ENCODE measurements at regions of chr3 and their contacts with region 1.

Region 1: GRCh38 chr3:195894780-195895607 is 13.4 kb downstream of the TNK2 start:
- DNase-seq: peak; percentile 72
- H3K4me3 Mint-ChIP-seq: peak overlapping the region; percentile 83
- H3K27ac Mint-ChIP-seq: peak overlapping the region; percentile 50
- H3K4me1 Mint-ChIP-seq: peaks cover 34% of the 10 kb centered on the region
- H3K27me3 Mint-ChIP-seq: no peaks in the 10 kb centered on the region
- CTCF ChIP-seq: peak; percentile 94

Region 2: GRCh38 chr3:194592798-194593752 is 1301.9 kb before region 1 on chr3:
- CTCF ChIA-PET with region 1: no interaction called
- intact Hi-C with region 1: no loop called
- DNase-seq: peak; percentile 78
- H3K4me3 Mint-ChIP-seq: no peak overlapping the region
- H3K27ac Mint-ChIP-seq: no peak overlapping the region
- H3K4me1 Mint-ChIP-seq: peaks cover 26% of the 10 kb centered on the region
- H3K27me3 Mint-ChIP-seq: no peaks in the 10 kb centered on the region
- CTCF ChIP-seq: no peak

Region 3: GRCh38 chr3:195154793-195155535 is 740.0 kb before region 1 on chr3:
- CTCF ChIA-PET with region 1: no interaction called
- intact Hi-C with region 1: no loop called
- DNase-seq: peak; percentile 90
- H3K4me3 Mint-ChIP-seq: no peak overlapping the region
- H3K27ac Mint-ChIP-seq: peak overlapping the region; percentile 57
- H3K4me1 Mint-ChIP-seq: peaks cover 68% of the 10 kb centered on the region
- H3K27me3 Mint-ChIP-seq: no peaks in the 10 kb centered on the region
- CTCF ChIP-seq: no peak

Region 4: GRCh38 chr3:195760345-195761122 is 134.5 kb before region 1 on chr3:
- CTCF ChIA-PET with region 1: no interaction called
- intact Hi-C with region 1: no loop called
- DNase-seq: no peak
- H3K4me3 Mint-ChIP-seq: no peak overlapping the region
- H3K27ac Mint-ChIP-seq: no peak overlapping the region
- H3K4me1 Mint-ChIP-seq: peaks cover 14% of the 10 kb centered on the region
- H3K27me3 Mint-ChIP-seq: peaks cover 59% of the 10 kb centered on the region
- CTCF ChIP-seq: no peak

Region 5: DNA sequence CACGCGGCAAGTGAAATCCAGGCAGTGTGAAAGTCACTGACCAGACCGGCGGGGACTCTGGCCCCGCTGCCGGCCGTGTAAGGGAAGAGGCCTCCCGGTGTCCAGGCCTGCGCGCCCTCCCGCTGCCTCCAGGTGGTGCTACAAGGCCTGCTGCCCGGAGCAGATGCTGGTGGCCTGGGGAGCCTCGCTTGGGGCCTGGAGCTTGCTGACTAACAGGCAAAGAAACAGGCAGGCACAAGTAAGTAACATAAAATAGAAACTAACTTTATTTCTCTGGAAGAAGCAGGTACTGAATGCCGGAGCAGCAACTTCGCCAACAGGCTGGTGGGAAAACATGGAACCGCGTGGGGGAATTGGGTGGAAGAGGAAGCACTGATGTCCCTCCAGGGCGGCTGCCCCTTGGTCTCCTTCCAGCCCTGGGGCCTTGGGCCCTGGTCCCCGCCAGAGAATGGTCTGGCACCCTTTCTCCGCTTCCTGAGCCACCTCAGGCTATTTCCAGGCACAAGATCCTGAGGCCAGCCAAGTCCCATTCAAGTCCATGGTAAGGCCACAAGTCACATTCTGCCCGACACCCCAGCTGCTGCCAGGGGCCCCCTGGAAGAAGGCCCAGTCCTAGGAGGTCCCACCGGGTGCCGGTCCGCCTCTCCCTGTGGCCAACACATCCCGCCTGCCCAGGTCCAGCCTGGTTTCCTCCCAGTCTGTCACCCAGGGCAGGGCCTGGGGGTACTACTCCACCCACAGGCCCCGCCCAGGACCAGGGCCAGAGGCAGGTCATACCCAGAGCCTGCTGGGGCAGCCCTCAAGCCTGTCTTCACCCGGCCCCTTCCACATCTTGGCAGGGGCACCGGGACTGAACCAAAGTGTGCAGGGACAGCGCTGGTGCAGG is 31.6 kb before region 1 on chr3:
- CTCF ChIA-PET with region 1: interaction called, 32 read pairs
- intact Hi-C with region 1: loop called (anchors 1 kb)
- DNase-seq: peak; percentile 90
- H3K4me3 Mint-ChIP-seq: no peak overlapping the region
- H3K27ac Mint-ChIP-seq: no peak overlapping the region
- H3K4me1 Mint-ChIP-seq: peaks cover 15% of the 10 kb centered on the region
- H3K27me3 Mint-ChIP-seq: peaks cover 18% of the 10 kb centered on the region
- CTCF ChIP-seq: peak; percentile 88

Region 6: DNA sequence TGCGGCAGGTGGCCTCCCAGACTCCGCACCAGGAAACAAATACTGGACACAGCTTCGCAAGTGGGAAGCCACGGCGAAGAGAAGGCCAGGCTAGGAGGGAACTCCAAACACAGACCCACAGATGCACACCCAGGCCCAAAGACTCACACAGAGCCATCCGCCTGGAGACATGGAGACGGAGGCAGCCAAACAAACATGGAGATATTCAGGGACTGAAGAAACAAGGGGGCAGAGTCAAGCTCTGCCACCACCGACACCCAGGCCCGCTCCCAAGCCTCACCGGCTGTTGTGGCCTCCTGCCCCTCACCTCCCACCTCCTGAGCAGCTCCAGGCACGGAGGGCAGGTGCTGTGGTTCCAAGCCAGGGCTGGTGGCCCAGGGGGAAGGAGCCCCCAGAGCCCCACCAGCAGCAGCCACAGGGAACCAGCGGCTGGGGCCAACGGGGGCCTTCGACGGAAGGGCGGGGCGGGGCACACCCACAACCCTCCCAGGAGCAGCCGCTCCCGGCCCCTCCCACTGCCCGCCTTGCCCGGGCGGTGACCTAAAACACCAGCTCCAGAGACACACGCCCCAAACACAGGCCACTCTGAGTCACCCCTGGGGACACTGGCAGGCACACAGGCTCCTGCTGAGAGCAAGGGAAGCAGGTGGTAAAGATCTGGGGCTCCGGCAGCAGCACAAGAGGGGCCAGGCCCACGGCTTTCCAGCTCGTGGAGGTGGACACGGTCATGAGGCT is 18.5 kb before region 1 on chr3:
- CTCF ChIA-PET with region 1: interaction called, 13 read pairs
- intact Hi-C with region 1: loop called (anchors 2 kb)
- DNase-seq: peak; percentile 94
- H3K4me3 Mint-ChIP-seq: peak overlapping the region; percentile 87
- H3K27ac Mint-ChIP-seq: peak overlapping the region; percentile 84
- H3K4me1 Mint-ChIP-seq: peaks cover 13% of the 10 kb centered on the region
- H3K27me3 Mint-ChIP-seq: no peaks in the 10 kb centered on the region
- CTCF ChIP-seq: no peak

Region 7: GRCh38 chr3:195914648-195915473 is 19.9 kb after region 1 on chr3:
- CTCF ChIA-PET with region 1: interaction called, 16 read pairs
- intact Hi-C with region 1: no loop called
- DNase-seq: peak; percentile 96
- H3K4me3 Mint-ChIP-seq: no peak overlapping the region
- H3K27ac Mint-ChIP-seq: peak overlapping the region; percentile 21
- H3K4me1 Mint-ChIP-seq: peaks cover 11% of the 10 kb centered on the region
- H3K27me3 Mint-ChIP-seq: peaks cover 38% of the 10 kb centered on the region
- CTCF ChIP-seq: peak; percentile 92